Endothelial cell of umbilical vein (primary cell): ENCODE measurements at regions of chr19 and their contacts with region 1.

Region 1: GRCh38 chr19:7197760-7198696 is 96.2 kb downstream of the INSR start:
- DNase-seq: peak; percentile 92
- H3K4me3 ChIP-seq: peak overlapping the region; percentile 38 to 52 (median 46)
- H3K27ac ChIP-seq: peak overlapping the region; percentile 48
- H3K4me1 ChIP-seq: peaks cover 7% of the 10 kb centered on the region
- H3K27me3 ChIP-seq: no peaks in the 10 kb centered on the region
- CTCF ChIP-seq: peak in 1 of 2 donors; percentile 19
- POLR2A ChIP-seq: peak; percentile 66

Region 2: GRCh38 chr19:6639439-6639838 is 558.6 kb before region 1 on chr19:
- CTCF ChIA-PET with region 1: no interaction called
- POLR2A ChIA-PET with region 1: no interaction called
- dilution Hi-C with region 1: no loop called
- intact Hi-C with region 1: no loop called
- DNase-seq: peak; percentile 35
- H3K4me3 ChIP-seq: no peak overlapping the region
- H3K27ac ChIP-seq: no peak overlapping the region
- H3K4me1 ChIP-seq: peaks cover 5% of the 10 kb centered on the region
- H3K27me3 ChIP-seq: no peaks in the 10 kb centered on the region
- CTCF ChIP-seq: no peak
- POLR2A ChIP-seq: no peak

Region 3: GRCh38 chr19:7152568-7152967 is 45.5 kb before region 1 on chr19:
- CTCF ChIA-PET with region 1: no interaction called
- POLR2A ChIA-PET with region 1: no interaction called
- dilution Hi-C with region 1: no loop called
- intact Hi-C with region 1: loop called (anchors 1 kb)
- DNase-seq: no peak
- H3K4me3 ChIP-seq: no peak overlapping the region
- H3K27ac ChIP-seq: no peak overlapping the region
- H3K4me1 ChIP-seq: peaks cover 3% of the 10 kb centered on the region
- H3K27me3 ChIP-seq: no peaks in the 10 kb centered on the region
- CTCF ChIP-seq: no peak
- POLR2A ChIP-seq: no peak

Region 4: DNA sequence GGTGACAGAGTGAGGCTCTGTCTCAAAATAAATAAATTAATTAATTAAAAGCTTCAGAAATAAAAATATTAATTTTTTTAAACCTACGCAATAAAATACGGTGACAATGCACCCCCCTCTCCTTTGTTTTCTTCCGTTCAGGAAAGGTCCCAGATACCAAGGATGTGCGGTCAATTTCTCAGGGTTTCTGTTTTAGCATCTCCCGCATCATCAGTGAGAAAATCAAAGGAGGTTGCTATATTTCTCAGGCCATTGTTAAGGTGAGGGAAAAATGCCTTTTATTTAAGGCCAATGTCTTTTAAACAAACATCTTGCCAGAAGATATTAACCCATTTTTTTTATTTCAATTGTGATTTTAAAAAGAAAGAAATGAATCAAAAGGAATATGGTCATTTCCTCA is 15.5 kb before region 1 on chr19:
- CTCF ChIA-PET with region 1: interaction called, 4 read pairs
- POLR2A ChIA-PET with region 1: no interaction called
- dilution Hi-C with region 1: no loop called
- intact Hi-C with region 1: loop called (anchors 2 kb)
- DNase-seq: no peak
- H3K4me3 ChIP-seq: peak overlapping the region in 1 of 3 experiments; percentile 24
- H3K27ac ChIP-seq: peak overlapping the region; percentile 78
- H3K4me1 ChIP-seq: peaks cover 18% of the 10 kb centered on the region
- H3K27me3 ChIP-seq: no peaks in the 10 kb centered on the region
- CTCF ChIP-seq: no peak
- POLR2A ChIP-seq: no peak

Region 5: DNA sequence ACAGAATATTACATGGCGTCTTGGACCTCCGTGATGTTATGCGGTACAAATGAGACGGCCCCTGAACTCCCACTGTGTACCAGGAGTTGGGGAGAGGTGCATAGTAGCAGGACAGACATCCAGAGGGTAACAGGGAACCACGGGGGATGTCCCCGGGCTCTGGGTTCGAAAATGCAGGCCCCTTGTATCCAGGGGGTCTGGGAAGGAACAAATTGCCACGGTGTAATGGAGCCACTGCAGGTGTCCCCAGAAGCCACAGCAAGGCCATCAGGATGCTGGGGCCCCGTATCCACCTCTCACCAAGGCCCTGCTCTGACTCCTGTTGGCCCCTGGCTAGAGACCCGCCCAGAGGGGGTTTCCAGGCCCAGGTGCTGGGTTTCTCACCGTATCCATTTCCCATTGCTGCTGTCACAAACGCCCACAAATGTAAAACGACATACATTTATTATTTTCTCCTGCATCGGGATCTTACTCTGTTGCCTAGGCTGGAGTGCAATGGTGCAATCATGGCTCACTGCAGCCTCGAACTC is 18.4 kb after region 1 on chr19:
- CTCF ChIA-PET with region 1: no interaction called
- POLR2A ChIA-PET with region 1: no interaction called
- dilution Hi-C with region 1: no loop called
- intact Hi-C with region 1: no loop called
- DNase-seq: no peak
- H3K4me3 ChIP-seq: no peak overlapping the region
- H3K27ac ChIP-seq: no peak overlapping the region
- H3K4me1 ChIP-seq: no peaks in the 10 kb centered on the region
- H3K27me3 ChIP-seq: peaks cover 0 to 3% of the 10 kb centered on the region in 2 experiments
- CTCF ChIP-seq: no peak
- POLR2A ChIP-seq: no peak

Region 6: GRCh38 chr19:7293795-7294570 is 96.0 kb after region 1 on chr19 and contains the start of gene INSR:
- CTCF ChIA-PET with region 1: interaction called, 7 read pairs
- POLR2A ChIA-PET with region 1: interaction called, 4 read pairs
- dilution Hi-C with region 1: no loop called
- intact Hi-C with region 1: loop called (anchors 1 kb)
- DNase-seq: peak; percentile 90
- H3K4me3 ChIP-seq: peak within 1 kb of the TSS; percentile 42 to 55 (median 50)
- H3K27ac ChIP-seq: peak within 1 kb of the TSS; percentile 14
- H3K4me1 ChIP-seq: peaks cover 3% of the 10 kb centered on the region
- H3K27me3 ChIP-seq: no peaks in the 10 kb centered on the region
- CTCF ChIP-seq: no peak
- POLR2A ChIP-seq: no peak
- total RNA-seq, gene INSR: 19.5 and 20.8 TPM in 2 replicates

Region 7: GRCh38 chr19:7340959-7341837 is 143.2 kb after region 1 on chr19:
- CTCF ChIA-PET with region 1: no interaction called
- POLR2A ChIA-PET with region 1: no interaction called
- dilution Hi-C with region 1: no loop called
- intact Hi-C with region 1: loop called (anchors 2 kb)
- DNase-seq: peak; percentile 86
- H3K4me3 ChIP-seq: no peak overlapping the region
- H3K27ac ChIP-seq: no peak overlapping the region
- H3K4me1 ChIP-seq: no peaks in the 10 kb centered on the region
- H3K27me3 ChIP-seq: no peaks in the 10 kb centered on the region
- CTCF ChIP-seq: peak; percentile 78 to 92
- POLR2A ChIP-seq: no peak